ENCODE measurements at regions of chr5 and their contacts with region 1.

Region 1: GRCh38 chr5:123344816-123345426 is 78.3 kb downstream of the CEP120 start:
- DNase-seq: no peak
- ATAC-seq: peak; percentile 47
- H3K4me3 ChIP-seq: no peak overlapping the region
- H3K27ac ChIP-seq: no peak overlapping the region
- H3K4me1 ChIP-seq: peaks cover 1 to 2% of the 10 kb centered on the region in 2 donors
- H3K27me3 ChIP-seq: no peaks in the 10 kb centered on the region

Region 2: DNA sequence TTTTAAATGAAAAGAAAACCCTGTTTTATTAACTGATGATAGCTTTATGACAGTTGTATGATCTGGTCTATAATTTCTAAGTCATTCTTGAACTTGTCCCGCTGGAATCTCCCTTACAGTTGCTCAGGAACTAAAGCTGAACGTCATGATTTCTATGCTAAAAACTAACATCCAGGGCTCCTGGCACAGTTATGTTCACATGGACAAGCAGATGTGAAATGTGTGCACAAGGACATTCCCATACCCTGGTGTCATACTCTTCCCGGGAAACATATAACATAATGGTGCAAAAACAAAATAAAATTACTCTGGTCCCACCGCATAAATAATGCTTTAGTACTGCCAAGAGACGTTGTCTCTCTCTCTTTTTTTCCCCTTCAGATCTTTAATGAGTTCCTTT is 121.0 kb before region 1 on chr5:
- intact Hi-C with region 1: no loop called
- DNase-seq: no peak
- ATAC-seq: no peak
- H3K4me3 ChIP-seq: no peak overlapping the region
- H3K27ac ChIP-seq: no peak overlapping the region
- H3K4me1 ChIP-seq: peaks cover 2 to 11% of the 10 kb centered on the region in 2 donors
- H3K27me3 ChIP-seq: no peaks in the 10 kb centered on the region

Region 3: DNA sequence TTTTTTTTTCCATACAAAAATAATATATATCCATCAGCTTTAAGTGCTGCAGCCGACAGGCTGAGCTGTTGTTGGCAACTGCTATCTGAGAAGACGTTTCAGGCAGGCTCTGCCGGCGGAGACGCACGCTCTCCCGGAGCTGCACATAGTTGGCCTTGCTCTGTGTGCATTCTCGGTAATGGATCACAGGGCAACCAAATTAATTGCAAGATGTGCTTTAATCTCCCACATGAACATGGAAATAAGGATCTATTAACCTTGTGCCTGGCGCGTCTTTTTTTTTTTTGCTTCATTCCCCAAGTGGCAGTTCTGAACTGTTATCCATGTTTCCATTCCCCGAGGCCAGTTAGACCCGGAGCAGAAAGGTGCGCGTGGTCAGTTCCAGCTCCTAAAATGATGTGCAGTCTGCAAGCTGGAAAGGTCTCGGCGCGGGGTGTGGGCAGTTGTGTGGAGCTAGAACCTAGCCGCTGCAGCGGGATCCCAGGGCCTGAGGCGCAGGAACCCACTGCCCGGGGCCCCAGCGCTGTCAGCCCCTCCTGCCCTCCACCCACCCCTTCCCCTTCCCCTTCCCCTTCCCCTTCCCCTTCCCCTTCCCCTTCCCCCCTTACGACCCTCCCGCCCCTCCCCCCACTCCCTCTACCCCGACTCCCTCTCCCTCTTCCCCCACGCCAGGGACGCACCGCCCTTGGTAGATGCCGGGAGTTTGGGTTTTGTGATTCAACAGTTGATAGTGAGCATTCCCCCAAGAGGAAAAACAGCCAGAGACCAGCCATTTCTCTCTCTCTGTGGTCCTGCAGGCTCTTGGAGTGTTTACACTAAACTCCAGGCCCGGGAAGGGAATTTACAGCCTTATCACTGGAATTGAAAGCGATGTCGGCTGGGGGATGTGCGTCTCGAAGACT is 59.5 kb before region 1 on chr5:
- intact Hi-C with region 1: loop called in 1 of 2 experiments (anchors 5 kb)
- DNase-seq: peak; percentile 66 to 80
- ATAC-seq: peak; percentile 75
- H3K4me3 ChIP-seq: peak overlapping the region; percentile 42 to 62
- H3K27ac ChIP-seq: peak overlapping the region; percentile 55 to 93
- H3K4me1 ChIP-seq: peaks cover 0 to 2% of the 10 kb centered on the region in 2 donors
- H3K27me3 ChIP-seq: no peaks in the 10 kb centered on the region

Region 4: GRCh38 chr5:123303802-123304201 is 41.1 kb before region 1 on chr5:
- intact Hi-C with region 1: loop called in 1 of 2 experiments (anchors 5 kb)
- DNase-seq: no peak
- ATAC-seq: no peak
- H3K4me3 ChIP-seq: no peak overlapping the region
- H3K27ac ChIP-seq: no peak overlapping the region
- H3K4me1 ChIP-seq: peaks cover 0 to 4% of the 10 kb centered on the region in 2 donors
- H3K27me3 ChIP-seq: no peaks in the 10 kb centered on the region

Region 5: GRCh38 chr5:123585871-123586270 is 240.9 kb after region 1 on chr5:
- intact Hi-C with region 1: no loop called
- DNase-seq: no peak
- ATAC-seq: no peak
- H3K4me3 ChIP-seq: no peak overlapping the region
- H3K27ac ChIP-seq: no peak overlapping the region
- H3K4me1 ChIP-seq: no peaks in the 10 kb centered on the region
- H3K27me3 ChIP-seq: no peaks in the 10 kb centered on the region